ENCODE measurements at regions of chr11 and their contacts with region 1.

Region 1: DNA sequence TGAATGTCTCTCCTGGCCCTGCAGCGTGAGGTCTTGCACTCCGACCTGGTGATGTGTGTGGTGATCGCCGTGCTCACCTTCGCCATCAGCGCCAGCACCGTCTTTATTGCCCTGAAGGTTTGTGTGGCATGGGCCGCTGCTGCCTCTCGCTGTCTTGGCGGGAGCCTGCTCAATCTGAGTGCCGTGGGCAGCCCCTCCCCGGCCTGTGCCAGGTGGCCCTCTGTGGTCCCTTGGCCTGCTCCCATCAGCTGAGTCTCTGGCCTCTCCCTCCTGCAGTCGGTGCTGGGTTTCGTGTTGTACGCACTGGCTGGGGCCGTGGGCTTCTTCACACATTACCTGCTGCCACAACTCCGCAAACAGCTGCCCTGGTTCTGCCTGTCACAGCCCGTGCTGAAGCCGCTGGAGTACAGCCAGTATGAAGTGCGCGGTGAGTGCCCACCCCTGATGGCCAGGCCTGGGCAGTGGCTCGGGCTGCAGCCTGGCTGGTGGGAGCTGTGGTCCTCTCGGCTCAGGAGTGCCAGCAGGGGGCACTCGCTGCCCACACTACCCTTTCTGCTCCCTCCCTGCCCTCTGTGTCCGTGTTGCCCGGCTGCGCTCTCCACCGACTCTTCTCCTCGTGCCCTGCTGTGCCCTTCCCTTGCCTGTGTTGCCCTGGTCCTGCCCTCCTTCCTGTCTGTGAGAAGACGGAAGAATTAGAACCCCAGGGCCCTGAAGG is 10.2 kb downstream of the PCNX3 start:
- DNase-seq: peak; percentile 66
- H3K4me3 ChIP-seq: no peak overlapping the region
- H3K27ac ChIP-seq: no peak overlapping the region
- H3K4me1 ChIP-seq: no peaks in the 10 kb centered on the region
- H3K27me3 ChIP-seq: no peaks in the 10 kb centered on the region
- CTCF ChIP-seq: peak; percentile 73

Region 2: GRCh38 chr11:65700391-65700790 is 74.6 kb after region 1 on chr11:
- intact Hi-C with region 1: loop called (anchors 10 kb)
- DNase-seq: no peak
- H3K4me3 ChIP-seq: no peak overlapping the region
- H3K27ac ChIP-seq: no peak overlapping the region
- H3K4me1 ChIP-seq: no peaks in the 10 kb centered on the region
- H3K27me3 ChIP-seq: no peaks in the 10 kb centered on the region
- CTCF ChIP-seq: no peak

Measured in colonic mucosa (tissue), 4 donors.